Heart left ventricle (tissue), 16 donors: ENCODE measurements at regions of chr14 and their contacts with region 1.

Region 1: DNA sequence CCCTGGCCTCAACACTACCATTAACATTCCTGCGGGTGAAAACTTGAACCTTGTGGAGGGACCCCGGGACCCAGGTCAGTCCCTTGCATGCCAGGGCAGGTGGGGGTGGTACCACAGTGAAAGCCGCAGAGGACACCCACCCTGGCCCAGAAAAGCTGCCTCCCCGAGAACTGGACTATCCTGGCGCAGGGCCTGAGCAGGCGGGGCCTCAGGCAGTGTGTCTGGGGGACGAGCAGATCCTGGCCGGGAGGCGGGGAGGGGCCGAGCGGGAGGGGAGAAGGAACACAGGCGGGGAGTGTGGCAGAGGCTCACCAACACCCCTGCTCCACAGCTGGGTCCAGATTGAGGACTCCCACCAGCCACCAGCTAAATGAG is 10.0 kb downstream of the AHNAK2 start:
- DNase-seq: peak in 4 of 5 donors; percentile 82 to 90 (median 83)
- ATAC-seq: peak; percentile 33 to 62 (median 54)
- H3K4me3 ChIP-seq: peak overlapping the region in 11 of 12 donors; percentile 6 to 59 (median 39)
- H3K27ac ChIP-seq: peak overlapping the region in 11 of 12 donors; percentile 22 to 94 (median 48)
- H3K4me1 ChIP-seq: peaks cover 6 to 52% (median 27%) of the 10 kb centered on the region in 12 donors
- H3K27me3 ChIP-seq: peaks cover 0 to 12% (median 0%) of the 10 kb centered on the region in 9 donors
- CTCF ChIP-seq: no peak
- POLR2A ChIP-seq: no peak

Region 2: DNA sequence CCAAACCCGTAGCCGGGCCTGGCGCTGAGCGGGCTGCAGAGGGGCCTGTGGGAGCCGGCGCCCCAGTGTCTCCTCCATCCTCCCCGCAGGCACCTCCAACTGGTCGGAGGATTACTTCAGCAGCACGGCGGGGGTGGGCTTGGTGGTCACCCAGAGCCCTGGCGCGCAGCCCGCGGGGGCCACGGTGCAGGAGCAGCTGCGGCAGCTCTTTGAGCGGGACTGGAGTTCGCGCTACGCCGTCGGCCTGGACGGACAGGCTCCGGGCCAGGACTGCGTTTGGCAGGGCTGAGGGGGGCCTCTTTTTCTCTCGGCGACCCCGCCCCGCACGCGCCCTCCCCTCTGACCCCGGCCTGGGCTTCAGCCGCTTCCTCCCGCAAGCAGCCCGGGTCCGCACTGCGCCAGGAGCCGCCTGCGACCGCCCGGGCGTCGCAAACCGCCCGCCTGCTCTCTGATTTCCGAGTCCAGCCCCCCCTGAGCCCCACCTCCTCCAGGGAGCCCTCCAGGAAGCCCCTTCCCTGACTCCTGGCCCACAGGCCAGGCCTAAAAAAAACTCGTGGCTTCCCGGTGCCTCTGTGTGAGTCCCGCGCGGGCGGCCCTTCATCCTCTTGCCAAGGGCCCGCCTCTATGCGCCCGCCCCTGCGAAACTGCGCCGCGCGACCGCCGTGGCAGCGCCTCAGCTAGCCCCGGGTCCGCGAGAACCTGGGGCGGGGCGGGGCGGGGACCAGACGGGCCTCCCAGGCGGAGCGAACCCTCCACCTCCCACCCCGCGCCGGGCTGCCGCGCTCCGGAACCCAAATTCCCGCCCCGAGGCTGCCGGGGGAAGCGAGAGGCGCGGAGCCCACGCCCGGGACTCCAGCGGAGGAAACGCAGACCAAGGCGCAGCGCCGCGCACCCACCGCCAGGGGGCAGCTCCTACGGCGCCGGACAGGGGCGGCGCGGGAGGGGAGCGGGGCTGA is 35.2 kb before region 1 on chr14:
- intact Hi-C with region 1: loop called in 3 of 10 experiments (anchors 2 to 5 kb)
- DNase-seq: peak; percentile 88 to 94 (median 88)
- ATAC-seq: peak; percentile 67 to 90 (median 86)
- H3K4me3 ChIP-seq: peak overlapping the region; percentile 52 to 86 (median 69)
- H3K27ac ChIP-seq: peak overlapping the region in 7 of 12 donors; percentile 19 to 76 (median 57)
- H3K4me1 ChIP-seq: peaks cover 0 to 18% (median 13%) of the 10 kb centered on the region in 12 donors
- H3K27me3 ChIP-seq: peaks cover 0 to 22% (median 5%) of the 10 kb centered on the region in 9 donors
- CTCF ChIP-seq: peak; percentile 60 to 81 (median 73)
- POLR2A ChIP-seq: no peak